Lower leg skin (tissue), 4 donors: ENCODE measurements at regions of chr6 and their contacts with region 1.

Region 1: DNA sequence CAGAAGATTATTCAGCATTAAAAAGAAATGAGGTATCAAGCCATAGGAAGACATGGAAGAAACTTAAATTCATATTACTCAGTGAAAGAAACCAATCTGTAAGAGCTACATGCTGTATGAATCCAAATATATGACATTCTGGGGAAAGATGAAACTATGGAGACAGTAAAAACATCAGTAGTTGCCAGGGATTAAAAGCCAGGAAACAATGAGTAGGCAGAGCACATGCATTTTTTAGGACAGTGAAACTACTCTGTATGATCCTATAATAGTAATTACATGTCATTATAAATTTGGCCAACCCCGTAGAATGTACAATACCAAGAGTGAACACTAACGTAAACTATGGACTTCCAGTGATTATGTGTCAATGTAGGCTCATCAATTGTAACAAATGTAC is 92.8 kb upstream of the RNF217 start:
- DNase-seq: no peak
- H3K4me3 ChIP-seq: no peak overlapping the region
- CTCF ChIP-seq: no peak
- POLR2A ChIP-seq: no peak

Region 2: DNA sequence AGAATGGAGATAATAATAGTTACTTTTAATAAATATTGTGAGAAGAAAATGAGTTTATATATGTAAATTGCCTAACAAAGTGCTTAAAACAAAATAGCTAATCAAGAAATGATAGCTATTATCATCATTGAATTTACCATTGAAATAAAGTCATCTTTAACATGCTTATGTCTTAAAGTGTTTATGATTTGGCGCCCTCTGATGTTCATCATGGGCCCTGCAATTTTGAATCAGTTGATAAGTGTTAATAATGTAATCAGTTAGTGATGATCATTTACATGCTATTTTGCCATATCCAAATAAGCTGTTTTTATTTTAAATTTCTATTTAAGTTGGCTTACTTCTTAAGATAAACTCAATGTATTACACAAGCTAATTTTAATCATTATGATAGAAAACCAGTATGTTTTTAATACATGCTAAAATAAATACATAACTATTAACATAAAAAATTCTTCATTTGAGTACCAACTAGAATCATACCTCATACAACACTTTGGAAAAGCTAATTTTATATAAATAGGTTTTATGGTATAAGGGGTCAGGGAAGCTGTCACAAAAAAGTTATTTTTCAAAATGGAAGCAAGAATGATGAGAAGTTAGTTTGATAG is 244.9 kb after region 1 on chr6:
- intact Hi-C with region 1: loop called (anchors 5 kb)
- DNase-seq: peak in 1 of 2 donors; percentile 70
- H3K4me3 ChIP-seq: no peak overlapping the region
- CTCF ChIP-seq: no peak
- POLR2A ChIP-seq: no peak